Mucosa of descending colon (tissue), 3 donors: ENCODE measurements at regions of chr6 and their contacts with region 1.

Region 1: GRCh38 chr6:31366693-31367470 is 9.9 kb upstream of the HLA-B start:
- DNase-seq: peak; percentile 86 to 92 (median 88)
- ATAC-seq: peak; percentile 100
- H3K4me3 ChIP-seq: no peak overlapping the region
- H3K4me1 ChIP-seq: no peaks in the 10 kb centered on the region
- CTCF ChIP-seq: peak; percentile 87

Region 2: DNA sequence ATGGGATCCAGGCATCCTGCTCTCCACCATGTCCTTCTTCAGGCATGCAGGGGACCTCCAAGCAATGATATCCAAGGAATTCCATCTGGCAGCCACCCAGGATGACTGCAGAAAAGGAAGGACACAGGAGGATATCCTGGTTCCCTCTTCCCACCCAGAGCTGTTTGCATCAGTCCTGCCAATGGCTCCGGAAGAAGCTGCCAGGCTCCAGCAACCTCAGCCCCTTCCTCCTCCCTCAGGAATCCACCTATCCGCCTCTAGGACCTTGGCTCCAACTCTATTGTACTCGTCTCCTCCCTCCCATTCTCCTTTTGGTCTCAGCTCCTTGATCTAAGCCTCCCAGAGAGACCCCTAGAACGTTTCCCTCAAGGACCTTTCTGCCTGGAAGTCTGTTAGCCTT is 227.3 kb before region 1 on chr6:
- intact Hi-C with region 1: loop called (anchors 5 kb)
- DNase-seq: no peak
- ATAC-seq: no peak
- H3K4me3 ChIP-seq: no peak overlapping the region
- H3K4me1 ChIP-seq: peaks cover 23% of the 10 kb centered on the region
- CTCF ChIP-seq: no peak

Region 3: DNA sequence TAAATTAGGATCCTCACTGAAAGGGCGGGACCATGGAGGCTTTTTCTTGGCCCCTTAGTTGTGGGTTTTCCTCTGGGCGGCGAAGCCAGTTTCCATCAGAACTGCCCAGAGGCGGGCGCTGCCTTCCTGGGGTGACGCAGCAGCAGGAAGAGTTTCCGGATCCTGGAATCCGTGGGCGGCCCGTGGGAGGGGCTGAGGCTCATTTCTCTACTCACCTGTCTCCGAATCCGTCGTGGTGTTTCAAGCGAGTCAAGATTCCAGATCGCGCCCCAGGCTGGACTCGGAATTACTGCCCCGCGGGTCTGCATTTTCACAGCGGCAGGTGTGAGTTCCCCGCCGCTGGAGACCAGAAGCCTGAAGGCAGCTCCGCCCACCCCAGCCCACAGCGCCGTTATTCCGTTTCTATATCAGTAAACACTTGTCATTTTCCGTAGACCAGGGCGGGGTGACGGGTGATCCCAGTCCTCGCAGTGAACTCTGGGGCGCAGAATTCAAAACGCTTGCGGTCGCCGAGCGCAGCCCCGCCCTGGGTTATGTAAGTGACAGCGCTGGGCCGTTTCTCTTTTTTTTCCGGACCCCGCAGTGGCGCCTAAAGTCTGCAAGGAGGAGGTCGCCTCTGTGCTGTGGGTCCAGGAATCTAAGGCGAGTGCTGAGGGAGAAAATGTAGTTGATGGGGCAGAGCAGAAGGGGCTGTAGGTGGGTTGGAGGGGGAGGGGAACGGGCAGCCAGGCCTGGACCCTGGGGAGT is 169.2 kb before region 1 on chr6:
- intact Hi-C with region 1: loop called (anchors 5 to 10 kb)
- DNase-seq: peak; percentile 92 to 97 (median 97)
- ATAC-seq: peak; percentile 85
- H3K4me3 ChIP-seq: peak overlapping the region; percentile 40
- H3K4me1 ChIP-seq: peaks cover 23% of the 10 kb centered on the region
- CTCF ChIP-seq: no peak